Panc1 (cell line): ENCODE measurements at regions of chr3 and their contacts with region 1.

Region 1: DNA sequence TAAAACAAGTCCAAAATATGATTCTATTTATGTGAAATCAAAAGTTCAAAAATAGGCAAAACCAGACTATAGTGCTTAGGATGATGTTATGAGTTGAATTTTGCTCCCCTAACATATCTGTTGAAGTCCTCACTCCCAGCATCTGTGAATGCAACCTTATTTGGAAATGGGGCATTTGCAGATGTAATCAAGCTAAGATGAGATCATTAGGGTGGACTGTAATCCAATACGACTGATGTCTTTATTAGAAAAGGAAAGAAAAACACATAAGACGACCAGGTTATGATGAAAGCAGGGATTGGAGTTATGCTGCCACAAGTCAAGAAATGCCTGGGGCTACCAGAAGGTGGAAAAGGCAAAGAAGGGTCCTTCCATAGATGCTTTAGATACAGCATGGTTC is 110.5 kb upstream of the CCDC39 start:
- DNase-seq: no peak
- ATAC-seq: no peak
- H3K4me3 ChIP-seq: no peak overlapping the region
- H3K27ac ChIP-seq: no peak overlapping the region
- H3K4me1 ChIP-seq: no peaks in the 10 kb centered on the region
- H3K27me3 ChIP-seq: no peaks in the 10 kb centered on the region
- CTCF ChIP-seq: no peak

Region 2: DNA sequence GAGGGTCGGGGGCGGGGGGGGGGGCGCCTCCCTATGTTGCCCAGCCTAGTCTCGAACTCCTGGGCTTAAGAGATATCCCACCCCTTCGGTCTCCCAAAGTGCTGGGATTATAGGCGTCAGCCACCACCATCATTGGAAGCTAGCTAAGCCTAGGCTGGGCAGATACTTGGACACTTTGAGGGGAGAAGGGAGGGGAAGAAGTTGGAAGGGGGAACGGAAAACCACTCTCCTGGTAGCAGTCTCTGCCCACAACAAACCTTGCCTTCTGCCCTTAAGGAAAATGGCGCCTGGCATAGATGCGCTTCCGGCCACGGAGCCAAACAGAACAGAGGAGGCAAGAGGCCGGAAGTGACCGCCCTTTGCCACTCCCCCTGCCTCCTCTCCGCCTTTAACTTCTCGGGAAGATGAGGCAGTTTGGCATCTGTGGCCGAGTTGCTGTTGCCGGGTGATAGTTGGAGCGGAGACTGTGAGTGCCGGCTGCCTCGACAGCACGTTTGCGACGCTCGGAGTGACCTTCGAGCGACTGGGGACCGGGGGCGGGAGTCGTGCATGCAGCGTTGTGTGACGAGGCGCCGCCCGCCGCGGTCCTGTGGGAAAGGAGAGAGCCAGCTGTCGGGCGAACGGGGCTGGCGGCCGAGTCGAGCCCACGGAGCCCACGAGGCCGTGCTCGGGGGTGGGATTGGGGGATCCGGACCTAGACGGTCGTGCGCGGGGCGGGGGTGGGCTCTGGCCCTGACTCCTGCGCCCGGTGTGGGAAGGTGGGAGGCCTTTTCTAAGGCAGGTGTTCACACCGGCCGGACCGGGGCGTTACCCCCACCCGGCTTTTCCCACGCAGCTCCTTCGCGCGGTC is 1442.2 kb before region 1 on chr3 and contains the start of gene MFN1:
- CTCF ChIA-PET with region 1: no interaction called
- POLR2A ChIA-PET with region 1: no interaction called
- in situ Hi-C with region 1: no loop called
- intact Hi-C with region 1: no loop called
- DNase-seq: peak; percentile 90
- ATAC-seq: peak; percentile 100
- H3K4me3 ChIP-seq: peak within 1 kb of the TSS; percentile 70 to 89
- H3K27ac ChIP-seq: peak within 1 kb of the TSS; percentile 84
- H3K4me1 ChIP-seq: peaks cover 12% of the 10 kb centered on the region
- H3K27me3 ChIP-seq: no peaks in the 10 kb centered on the region
- CTCF ChIP-seq: no peak
- total RNA-seq, gene MFN1: 73.5 TPM

Region 3: DNA sequence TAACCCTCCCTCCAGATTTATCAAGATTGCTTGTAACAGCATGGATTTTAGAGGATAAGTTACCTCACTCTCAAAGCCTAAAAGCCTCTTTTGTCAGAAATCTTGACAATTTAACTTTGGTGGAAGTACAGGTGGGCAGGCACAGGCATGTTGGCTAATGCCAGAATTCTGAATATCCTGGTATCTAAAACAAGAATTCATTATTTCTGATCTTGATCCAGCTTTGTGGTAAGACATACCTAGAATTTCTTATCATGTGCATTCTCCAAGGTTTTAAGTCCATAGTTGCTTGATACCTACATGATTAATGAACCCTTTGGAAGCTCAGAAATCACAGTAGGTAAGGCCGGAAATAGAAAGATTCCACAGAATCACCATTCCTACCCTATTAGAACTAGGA is 297.7 kb before region 1 on chr3:
- CTCF ChIA-PET with region 1: no interaction called
- POLR2A ChIA-PET with region 1: no interaction called
- in situ Hi-C with region 1: no loop called
- intact Hi-C with region 1: no loop called
- DNase-seq: no peak
- ATAC-seq: no peak
- H3K4me3 ChIP-seq: no peak overlapping the region
- H3K27ac ChIP-seq: no peak overlapping the region
- H3K4me1 ChIP-seq: no peaks in the 10 kb centered on the region
- H3K27me3 ChIP-seq: no peaks in the 10 kb centered on the region
- CTCF ChIP-seq: no peak

Region 4: GRCh38 chr3:180633722-180634121 is 156.1 kb before region 1 on chr3:
- CTCF ChIA-PET with region 1: no interaction called
- POLR2A ChIA-PET with region 1: no interaction called
- in situ Hi-C with region 1: no loop called
- intact Hi-C with region 1: loop called (anchors 10 kb)
- DNase-seq: no peak
- ATAC-seq: peak; percentile 51; the same call in 1 of the 2 replicates
- H3K4me3 ChIP-seq: no peak overlapping the region
- H3K27ac ChIP-seq: no peak overlapping the region
- H3K4me1 ChIP-seq: no peaks in the 10 kb centered on the region
- H3K27me3 ChIP-seq: peaks cover 18% of the 10 kb centered on the region
- CTCF ChIP-seq: no peak

Region 5: GRCh38 chr3:180656406-180656805 is 133.4 kb before region 1 on chr3:
- CTCF ChIA-PET with region 1: no interaction called
- POLR2A ChIA-PET with region 1: no interaction called
- in situ Hi-C with region 1: no loop called
- intact Hi-C with region 1: no loop called
- DNase-seq: no peak
- ATAC-seq: no peak
- H3K4me3 ChIP-seq: no peak overlapping the region
- H3K27ac ChIP-seq: no peak overlapping the region
- H3K4me1 ChIP-seq: no peaks in the 10 kb centered on the region
- H3K27me3 ChIP-seq: no peaks in the 10 kb centered on the region
- CTCF ChIP-seq: no peak